ENCODE measurements at regions of chr6 and their contacts with region 1.

Region 1: GRCh38 chr6:154370545-154370944 is 13.9 kb upstream of the IPCEF1 start:
- DNase-seq: peak in 1 of 2 experiments; percentile 35
- H3K4me3 ChIP-seq: no peak overlapping the region
- H3K4me3 Mint-ChIP-seq: no peak overlapping the region
- H3K27ac Mint-ChIP-seq: no peak overlapping the region
- H3K4me1 ChIP-seq: peaks cover 22% of the 10 kb centered on the region
- H3K4me1 Mint-ChIP-seq: peaks cover 20% of the 10 kb centered on the region
- H3K27me3 ChIP-seq: no peaks in the 10 kb centered on the region
- H3K27me3 Mint-ChIP-seq: no peaks in the 10 kb centered on the region
- CTCF ChIP-seq: peak in 1 of 2 experiments; percentile 62

Region 2: GRCh38 chr6:154156135-154156896 is 214.2 kb before region 1 on chr6:
- CTCF ChIA-PET with region 1: no interaction called
- POLR2A ChIA-PET with region 1: no interaction called
- intact Hi-C with region 1: loop called (anchors 1 kb)
- DNase-seq: peak; percentile 36 to 55
- H3K4me3 ChIP-seq: no peak overlapping the region
- H3K4me3 Mint-ChIP-seq: no peak overlapping the region
- H3K27ac Mint-ChIP-seq: no peak overlapping the region
- H3K4me1 ChIP-seq: no peaks in the 10 kb centered on the region
- H3K4me1 Mint-ChIP-seq: no peaks in the 10 kb centered on the region
- H3K27me3 ChIP-seq: no peaks in the 10 kb centered on the region
- H3K27me3 Mint-ChIP-seq: no peaks in the 10 kb centered on the region
- CTCF ChIP-seq: peak; percentile 41 to 65

Region 3: DNA sequence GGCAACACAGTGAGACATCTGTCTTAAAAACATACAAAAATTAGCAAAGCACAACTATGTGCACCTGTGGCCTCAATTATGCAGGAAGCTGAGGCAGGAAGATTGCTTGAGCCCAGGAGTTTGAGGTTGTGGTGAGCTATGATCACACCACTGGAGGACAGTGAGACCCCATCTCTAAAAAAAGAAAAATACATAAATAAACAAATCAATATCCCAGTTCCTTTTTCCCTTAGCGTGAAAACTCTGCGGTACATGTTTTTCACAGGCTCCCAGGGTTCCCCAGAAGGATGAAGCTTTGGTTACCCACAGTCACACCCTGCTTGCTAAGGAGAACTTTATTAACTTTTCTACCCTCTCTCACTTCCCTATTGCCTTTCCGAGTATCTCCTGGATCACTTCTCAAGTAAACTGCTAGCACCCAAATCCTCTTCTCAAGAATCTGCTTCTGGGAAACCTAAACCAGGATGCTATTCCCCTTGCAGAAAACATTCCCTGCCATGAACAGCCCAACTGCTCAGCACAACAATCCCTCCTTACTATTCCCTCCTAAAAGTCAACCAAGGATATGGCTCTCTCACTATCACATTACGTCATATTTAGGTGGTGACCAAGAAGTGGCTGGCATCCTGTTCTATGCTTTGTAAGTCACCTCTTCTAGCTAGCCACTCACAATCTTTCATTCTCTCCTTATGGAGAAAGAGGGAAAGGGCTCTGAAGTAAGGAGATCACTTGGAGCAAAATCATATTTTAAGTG is 136.3 kb before region 1 on chr6:
- CTCF ChIA-PET with region 1: no interaction called
- POLR2A ChIA-PET with region 1: no interaction called
- intact Hi-C with region 1: no loop called
- DNase-seq: no peak
- H3K4me3 ChIP-seq: no peak overlapping the region
- H3K4me3 Mint-ChIP-seq: no peak overlapping the region
- H3K27ac Mint-ChIP-seq: no peak overlapping the region
- H3K4me1 ChIP-seq: no peaks in the 10 kb centered on the region
- H3K4me1 Mint-ChIP-seq: no peaks in the 10 kb centered on the region
- H3K27me3 ChIP-seq: no peaks in the 10 kb centered on the region
- H3K27me3 Mint-ChIP-seq: no peaks in the 10 kb centered on the region
- CTCF ChIP-seq: no peak

Region 4: GRCh38 chr6:154276810-154277628 is 93.5 kb before region 1 on chr6:
- CTCF ChIA-PET with region 1: interaction called, 3 read pairs
- POLR2A ChIA-PET with region 1: no interaction called
- intact Hi-C with region 1: loop called (anchors 1 kb)
- DNase-seq: no peak
- H3K4me3 ChIP-seq: no peak overlapping the region
- H3K4me3 Mint-ChIP-seq: peak overlapping the region; percentile 40
- H3K27ac Mint-ChIP-seq: no peak overlapping the region
- H3K4me1 ChIP-seq: no peaks in the 10 kb centered on the region
- H3K4me1 Mint-ChIP-seq: no peaks in the 10 kb centered on the region
- H3K27me3 ChIP-seq: no peaks in the 10 kb centered on the region
- H3K27me3 Mint-ChIP-seq: no peaks in the 10 kb centered on the region
- CTCF ChIP-seq: peak; percentile 25 to 46

Region 5: DNA sequence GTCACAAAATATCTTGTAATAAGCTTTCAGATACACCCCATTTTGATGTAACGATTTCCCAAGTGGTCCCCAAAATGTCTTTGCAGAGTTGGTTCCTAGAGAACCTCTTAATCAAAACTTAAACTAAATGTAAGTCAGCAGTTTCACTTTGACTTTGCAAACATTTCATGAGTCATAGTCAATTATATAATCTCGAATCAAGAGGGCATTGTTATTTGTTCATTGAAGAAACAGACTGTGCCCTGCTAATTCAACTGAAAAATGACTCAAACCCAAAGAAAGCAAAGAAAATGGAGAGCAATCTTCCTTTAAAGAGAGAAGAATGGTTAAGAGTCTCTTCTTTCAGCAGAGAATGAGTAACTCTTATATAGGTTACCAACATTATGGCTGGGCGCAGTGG is 72.2 kb before region 1 on chr6:
- CTCF ChIA-PET with region 1: no interaction called
- POLR2A ChIA-PET with region 1: no interaction called
- intact Hi-C with region 1: loop called (anchors 5 kb)
- DNase-seq: no peak
- H3K4me3 ChIP-seq: no peak overlapping the region
- H3K4me3 Mint-ChIP-seq: no peak overlapping the region
- H3K27ac Mint-ChIP-seq: no peak overlapping the region
- H3K4me1 ChIP-seq: peaks cover 14% of the 10 kb centered on the region
- H3K4me1 Mint-ChIP-seq: peaks cover 10% of the 10 kb centered on the region
- H3K27me3 ChIP-seq: no peaks in the 10 kb centered on the region
- H3K27me3 Mint-ChIP-seq: no peaks in the 10 kb centered on the region
- CTCF ChIP-seq: no peak

Region 6: DNA sequence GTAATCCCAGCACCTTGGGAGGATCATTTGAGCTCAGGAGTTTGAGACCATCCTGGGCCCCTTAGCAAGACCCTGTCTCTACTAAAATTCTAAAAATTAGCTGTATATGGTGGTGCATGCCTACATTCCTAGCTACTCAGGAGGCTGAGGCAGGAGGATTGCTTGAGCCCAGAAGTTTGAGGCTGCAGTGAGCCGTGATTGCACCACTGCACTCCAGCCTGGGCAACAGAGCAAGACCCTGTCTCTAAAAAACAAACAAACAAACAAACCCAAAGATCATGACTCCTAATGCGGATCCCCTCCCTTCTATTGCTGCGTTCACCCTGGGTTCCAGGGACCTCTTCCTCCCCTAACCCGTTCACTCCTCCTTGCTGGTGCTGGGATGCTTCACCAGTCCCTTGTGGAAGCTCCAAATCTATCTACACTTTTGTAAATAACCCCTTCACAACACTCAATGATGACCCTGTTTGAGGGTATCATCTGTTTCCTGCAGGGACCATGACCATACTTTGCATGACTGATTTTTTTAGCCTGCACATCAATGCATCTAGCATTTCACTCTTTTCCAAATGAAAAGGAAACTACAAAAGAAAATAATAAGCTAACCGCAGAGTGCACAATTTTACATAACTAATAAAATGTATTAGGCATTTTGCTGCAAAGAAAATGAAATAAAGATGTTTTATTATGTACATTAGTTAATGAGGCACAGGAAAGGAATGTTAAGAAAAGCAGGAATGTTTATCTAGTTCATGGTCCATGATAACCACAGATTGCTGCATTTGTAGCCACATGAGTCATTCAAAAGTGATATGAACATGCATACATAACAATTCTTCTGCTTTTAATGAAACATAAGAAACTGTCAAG is 16.5 kb after region 1 on chr6:
- CTCF ChIA-PET with region 1: no interaction called
- POLR2A ChIA-PET with region 1: no interaction called
- intact Hi-C with region 1: loop called (anchors 1 kb)
- DNase-seq: peak in 1 of 2 experiments; percentile 34
- H3K4me3 ChIP-seq: no peak overlapping the region
- H3K4me3 Mint-ChIP-seq: peak overlapping the region; percentile 18
- H3K27ac Mint-ChIP-seq: peak overlapping the region; percentile 89
- H3K4me1 ChIP-seq: peaks cover 53% of the 10 kb centered on the region
- H3K4me1 Mint-ChIP-seq: peaks cover 54% of the 10 kb centered on the region
- H3K27me3 ChIP-seq: no peaks in the 10 kb centered on the region
- H3K27me3 Mint-ChIP-seq: no peaks in the 10 kb centered on the region
- CTCF ChIP-seq: no peak

Measured in Caco-2 (cell line).